ENCODE measurements at regions of chr20 and their contacts with region 1.

Region 1: DNA sequence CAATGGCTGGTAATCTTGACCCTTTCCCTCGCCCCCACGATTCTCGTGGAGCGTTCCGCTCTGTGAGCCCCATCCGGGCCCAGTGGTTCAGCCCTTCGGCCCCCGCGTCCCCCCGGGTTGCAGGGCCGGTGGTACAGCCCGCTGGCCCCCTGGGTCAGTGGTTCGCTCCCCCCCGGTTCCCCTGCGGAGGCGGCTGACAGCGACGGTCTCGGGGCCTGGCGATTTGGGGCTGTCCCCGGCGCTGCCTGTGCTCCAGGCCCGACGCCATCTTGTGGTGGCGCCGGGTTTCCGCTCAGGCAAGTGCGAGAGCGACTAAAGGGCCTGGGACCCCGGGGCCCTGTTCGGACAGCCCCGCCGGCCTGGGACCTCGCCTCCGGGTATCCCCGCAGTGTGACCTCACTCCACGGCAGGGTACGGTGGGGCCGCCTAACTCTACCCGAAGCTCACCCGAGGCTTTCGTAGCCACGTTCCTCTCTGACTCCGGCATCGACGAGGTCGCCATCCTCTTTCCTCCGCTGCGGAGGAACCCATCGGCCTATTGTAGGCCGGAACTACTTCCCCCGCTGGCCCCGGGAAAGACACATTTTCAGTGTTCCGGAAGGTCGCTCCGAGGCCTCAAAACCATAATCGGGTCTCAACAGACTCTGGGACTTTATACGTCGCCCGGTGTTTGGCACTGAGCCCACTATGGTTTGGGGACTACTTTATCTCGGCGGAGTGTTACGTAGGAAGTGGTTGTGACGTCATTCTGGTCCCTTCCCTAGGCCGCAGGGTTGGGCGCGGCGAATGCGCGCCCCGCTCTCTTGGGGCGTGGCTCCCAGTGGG is at the start of gene ZNF335:
- DNase-seq: peak; percentile 86 to 97 (median 94)
- ATAC-seq: peak; percentile 80
- H3K4me3 ChIP-seq: peak within 1 kb of the TSS; percentile 96
- H3K4me3 Mint-ChIP-seq: peak within 1 kb of the TSS; percentile 94
- H3K27ac ChIP-seq: peak within 1 kb of the TSS; percentile 99 to 100
- H3K27ac Mint-ChIP-seq: peak within 1 kb of the TSS; percentile 100
- H3K4me1 ChIP-seq: peaks cover 36% of the 10 kb centered on the region
- H3K4me1 Mint-ChIP-seq: peaks cover 28% of the 10 kb centered on the region
- H3K27me3 ChIP-seq: no peaks in the 10 kb centered on the region
- H3K27me3 Mint-ChIP-seq: peaks cover 4% of the 10 kb centered on the region
- CTCF ChIP-seq: no peak
- total RNA-seq, gene ZNF335: 67.3 to 74.6 TPM

Region 2: DNA sequence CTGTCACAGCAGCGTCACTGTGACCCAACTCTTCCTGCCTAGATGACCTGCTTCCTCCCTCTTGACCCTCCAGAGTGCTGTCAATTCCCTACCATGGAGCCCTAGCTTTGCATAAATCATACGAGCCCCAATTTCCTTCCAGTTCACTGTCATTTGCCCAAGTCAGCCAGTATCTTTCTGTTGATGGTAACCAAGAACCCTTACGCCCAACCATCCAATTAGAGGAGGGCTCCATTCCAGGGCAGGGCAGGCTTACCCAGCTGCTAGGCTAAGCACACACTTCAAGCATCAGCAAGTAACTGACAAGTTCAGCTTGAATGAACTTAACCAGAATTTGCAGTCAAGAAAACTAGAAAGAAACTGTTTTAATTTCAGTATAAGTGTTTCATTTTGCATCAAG is 205.9 kb before region 1 on chr20:
- CTCF ChIA-PET with region 1: no interaction called
- POLR2A ChIA-PET with region 1: no interaction called
- intact Hi-C with region 1: no loop called
- DNase-seq: no peak
- ATAC-seq: no peak
- H3K4me3 ChIP-seq: no peak overlapping the region
- H3K4me3 Mint-ChIP-seq: no peak overlapping the region
- H3K27ac ChIP-seq: no peak overlapping the region
- H3K27ac Mint-ChIP-seq: no peak overlapping the region
- H3K4me1 ChIP-seq: peaks cover 2% of the 10 kb centered on the region
- H3K4me1 Mint-ChIP-seq: peaks cover 2% of the 10 kb centered on the region
- H3K27me3 ChIP-seq: no peaks in the 10 kb centered on the region
- H3K27me3 Mint-ChIP-seq: peaks cover 5% of the 10 kb centered on the region
- CTCF ChIP-seq: no peak

Region 3: DNA sequence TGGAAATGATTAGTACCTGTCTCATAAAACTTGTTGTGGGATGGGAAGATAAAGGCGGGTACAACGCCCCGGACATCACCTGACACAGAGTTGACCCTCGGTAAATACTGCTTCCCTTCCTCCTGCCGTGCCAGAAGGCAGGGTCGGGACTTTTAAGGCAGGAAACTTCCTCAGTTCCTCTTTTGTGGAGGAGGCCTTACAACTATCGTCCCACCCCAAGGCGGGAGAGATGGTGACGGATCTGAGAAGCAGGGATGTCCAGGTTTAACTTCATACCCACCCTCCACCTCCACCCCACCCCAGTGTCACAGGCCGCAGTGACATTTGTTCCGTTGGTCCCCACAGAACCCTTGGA is 179.6 kb before region 1 on chr20:
- CTCF ChIA-PET with region 1: no interaction called
- POLR2A ChIA-PET with region 1: interaction called, 8 read pairs
- intact Hi-C with region 1: loop called in 1 of 2 experiments (anchors 5 kb)
- DNase-seq: peak in 4 of 14 experiments; percentile 1 to 56 (median 4)
- ATAC-seq: peak; percentile 3
- H3K4me3 ChIP-seq: peak overlapping the region; percentile 90
- H3K4me3 Mint-ChIP-seq: peak overlapping the region; percentile 98
- H3K27ac ChIP-seq: peak overlapping the region; percentile 80 to 81
- H3K27ac Mint-ChIP-seq: peak overlapping the region; percentile 91
- H3K4me1 ChIP-seq: peaks cover 20% of the 10 kb centered on the region
- H3K4me1 Mint-ChIP-seq: peaks cover 25% of the 10 kb centered on the region
- H3K27me3 ChIP-seq: no peaks in the 10 kb centered on the region
- H3K27me3 Mint-ChIP-seq: no peaks in the 10 kb centered on the region
- CTCF ChIP-seq: no peak

Region 4: GRCh38 chr20:45880988-45881788 is 90.7 kb before region 1 on chr20 and contains the start of gene ZSWIM1:
- CTCF ChIA-PET with region 1: interaction called, 3 read pairs
- POLR2A ChIA-PET with region 1: interaction called, 23 read pairs
- intact Hi-C with region 1: no loop called
- DNase-seq: peak; percentile 96 to 100 (median 99)
- ATAC-seq: peak; percentile 98
- H3K4me3 ChIP-seq: peak within 1 kb of the TSS; percentile 78
- H3K4me3 Mint-ChIP-seq: peak within 1 kb of the TSS; percentile 87
- H3K27ac ChIP-seq: peak within 1 kb of the TSS; percentile 79 to 82
- H3K27ac Mint-ChIP-seq: peak within 1 kb of the TSS; percentile 86
- H3K4me1 ChIP-seq: peaks cover 51% of the 10 kb centered on the region
- H3K4me1 Mint-ChIP-seq: peaks cover 42% of the 10 kb centered on the region
- H3K27me3 ChIP-seq: no peaks in the 10 kb centered on the region
- H3K27me3 Mint-ChIP-seq: no peaks in the 10 kb centered on the region
- CTCF ChIP-seq: no peak
- total RNA-seq, gene ZSWIM1: 9.3 to 10.7 TPM

Region 5: GRCh38 chr20:46004889-46005473 is 33.1 kb after region 1 on chr20:
- CTCF ChIA-PET with region 1: no interaction called
- POLR2A ChIA-PET with region 1: interaction called, 11 read pairs
- intact Hi-C with region 1: loop called (anchors 5 kb)
- DNase-seq: peak in 6 of 14 experiments; percentile 18 to 78 (median 62)
- ATAC-seq: peak; percentile 79
- H3K4me3 ChIP-seq: peak overlapping the region; percentile 44
- H3K4me3 Mint-ChIP-seq: peak overlapping the region; percentile 85
- H3K27ac ChIP-seq: no peak overlapping the region
- H3K27ac Mint-ChIP-seq: peak overlapping the region; percentile 88
- H3K4me1 ChIP-seq: peaks cover 79% of the 10 kb centered on the region
- H3K4me1 Mint-ChIP-seq: peaks cover 84% of the 10 kb centered on the region
- H3K27me3 ChIP-seq: peaks cover 13 to 18% of the 10 kb centered on the region in 2 experiments
- H3K27me3 Mint-ChIP-seq: peaks cover 24% of the 10 kb centered on the region
- CTCF ChIP-seq: no peak

Region 6: DNA sequence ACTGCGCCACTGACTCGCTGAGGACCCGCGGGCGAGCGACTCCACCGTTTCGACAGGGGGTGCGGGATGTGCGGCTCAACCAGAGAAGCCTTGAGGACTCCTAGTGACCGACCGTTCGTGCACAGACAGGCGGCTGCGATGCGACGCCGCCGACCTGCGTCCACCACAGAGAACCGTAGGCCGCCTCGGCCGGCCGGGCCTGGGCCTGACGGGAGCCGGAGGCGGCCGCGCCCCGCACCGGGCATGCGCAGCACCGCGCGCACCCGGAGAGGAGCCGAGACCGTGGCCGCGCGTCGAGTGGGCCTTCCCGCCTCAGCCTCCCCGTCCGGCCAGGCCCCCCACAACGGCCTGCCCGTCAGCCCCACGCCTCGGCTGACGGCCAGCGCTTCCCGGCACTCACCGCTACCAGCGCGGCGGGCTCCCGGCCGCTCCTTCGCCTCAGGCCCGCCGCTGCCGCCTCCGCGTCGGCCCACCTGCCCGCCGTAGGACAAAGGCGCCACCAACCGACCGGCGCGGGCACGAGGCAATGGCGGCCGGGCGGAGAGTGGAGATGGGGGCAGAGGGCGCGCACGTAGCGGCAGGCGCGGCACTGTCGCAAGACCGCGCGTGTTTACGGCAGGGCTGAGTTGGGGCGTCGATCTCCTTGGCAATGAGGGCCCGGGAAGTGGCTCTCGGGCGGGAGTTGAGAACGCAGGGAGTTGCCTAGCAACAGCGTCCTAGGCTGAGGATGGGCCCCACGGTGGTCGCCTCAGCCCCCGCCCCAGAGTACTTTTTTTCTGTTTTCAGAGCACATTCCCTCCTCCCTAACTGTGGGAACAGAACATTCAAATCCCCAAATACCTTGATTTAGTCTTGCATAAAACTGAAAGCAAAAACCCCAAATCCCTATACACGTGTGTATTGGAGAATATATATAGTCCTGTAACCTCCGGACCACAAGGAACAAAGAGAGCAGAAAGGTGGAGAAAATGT is 117.8 kb after region 1 on chr20 and contains the start of gene NCOA5:
- CTCF ChIA-PET with region 1: interaction called, 4 read pairs
- POLR2A ChIA-PET with region 1: no interaction called
- intact Hi-C with region 1: loop called (anchors 2 to 5 kb)
- DNase-seq: peak; percentile 86 to 97 (median 92)
- ATAC-seq: peak; percentile 90
- H3K4me3 ChIP-seq: peak within 1 kb of the TSS; percentile 95
- H3K4me3 Mint-ChIP-seq: peak within 1 kb of the TSS; percentile 94
- H3K27ac ChIP-seq: peak within 1 kb of the TSS; percentile 67 to 85
- H3K27ac Mint-ChIP-seq: peak within 1 kb of the TSS; percentile 86
- H3K4me1 ChIP-seq: peaks cover 22% of the 10 kb centered on the region
- H3K4me1 Mint-ChIP-seq: peaks cover 54% of the 10 kb centered on the region
- H3K27me3 ChIP-seq: peaks cover 0 to 3% of the 10 kb centered on the region in 2 experiments
- H3K27me3 Mint-ChIP-seq: no peaks in the 10 kb centered on the region
- CTCF ChIP-seq: no peak
- total RNA-seq, gene NCOA5: 9.7 to 10.5 TPM

Measured in CD4-positive, alpha-beta T cell (primary cell).